HepG2 (cell line): ENCODE measurements at regions of chr9 and their contacts with region 1.

Region 1: DNA sequence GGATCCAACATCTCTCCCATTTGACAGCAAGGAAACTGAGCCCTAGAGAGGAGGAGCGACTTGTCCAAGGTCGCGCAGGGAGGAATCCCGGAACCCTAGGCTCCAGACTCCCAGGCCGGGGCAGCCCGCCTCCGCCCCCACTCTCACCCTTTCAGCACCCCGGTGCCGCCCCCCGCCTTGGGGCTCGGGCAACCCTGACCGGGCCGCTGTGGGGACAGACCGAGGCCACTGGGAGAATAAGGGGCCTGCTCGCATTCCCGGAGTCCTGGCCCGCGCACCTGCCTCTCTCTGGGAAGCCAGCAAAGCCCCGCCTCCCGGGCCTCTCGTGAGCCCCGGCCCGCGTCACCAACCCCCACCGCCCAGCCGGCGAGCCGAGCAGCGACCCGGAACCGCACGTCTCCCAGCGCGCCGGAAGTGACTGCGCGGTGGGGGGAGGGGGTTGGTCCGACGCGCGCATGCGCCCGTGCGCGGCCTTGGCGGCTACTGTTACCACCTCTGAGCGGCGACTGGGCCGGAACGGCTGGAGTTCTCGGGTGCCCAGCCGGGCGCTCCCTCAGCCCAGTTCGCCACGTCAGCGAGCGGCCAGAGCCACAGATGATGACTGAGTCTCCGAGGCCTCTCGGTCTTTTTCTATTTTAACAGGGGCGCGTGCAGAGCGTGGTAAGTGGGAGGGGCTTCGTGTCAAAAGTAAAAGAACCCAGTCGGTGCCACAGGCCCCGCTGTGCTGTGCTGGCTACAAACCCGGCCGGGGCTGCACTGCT is at the start of gene GOLGA1:
- DNase-seq: peak; percentile 89
- ATAC-seq: peak; percentile 91
- H3K4me3 ChIP-seq: peak within 1 kb of the TSS; percentile 94 to 99 (median 94)
- H3K27ac ChIP-seq: peak within 1 kb of the TSS; percentile 100
- H3K4me1 ChIP-seq: peaks cover 23% of the 10 kb centered on the region
- H3K27me3 ChIP-seq: no peaks in the 10 kb centered on the region; a peak in 1 of 5 replicates
- CTCF ChIP-seq: no peak
- EP300 ChIP-seq: peak in 1 of 2 experiments; percentile 53; a peak in 1 of 4 replicates
- POLR2A ChIP-seq: peak; percentile 86 to 94
- RAD21 ChIP-seq: 0 out of 2 replicates have a peak, but pooled peaks have one; percentile 7
- total RNA-seq, gene GOLGA1: 15.9 and 21.5 TPM in 2 replicates

Region 2: DNA sequence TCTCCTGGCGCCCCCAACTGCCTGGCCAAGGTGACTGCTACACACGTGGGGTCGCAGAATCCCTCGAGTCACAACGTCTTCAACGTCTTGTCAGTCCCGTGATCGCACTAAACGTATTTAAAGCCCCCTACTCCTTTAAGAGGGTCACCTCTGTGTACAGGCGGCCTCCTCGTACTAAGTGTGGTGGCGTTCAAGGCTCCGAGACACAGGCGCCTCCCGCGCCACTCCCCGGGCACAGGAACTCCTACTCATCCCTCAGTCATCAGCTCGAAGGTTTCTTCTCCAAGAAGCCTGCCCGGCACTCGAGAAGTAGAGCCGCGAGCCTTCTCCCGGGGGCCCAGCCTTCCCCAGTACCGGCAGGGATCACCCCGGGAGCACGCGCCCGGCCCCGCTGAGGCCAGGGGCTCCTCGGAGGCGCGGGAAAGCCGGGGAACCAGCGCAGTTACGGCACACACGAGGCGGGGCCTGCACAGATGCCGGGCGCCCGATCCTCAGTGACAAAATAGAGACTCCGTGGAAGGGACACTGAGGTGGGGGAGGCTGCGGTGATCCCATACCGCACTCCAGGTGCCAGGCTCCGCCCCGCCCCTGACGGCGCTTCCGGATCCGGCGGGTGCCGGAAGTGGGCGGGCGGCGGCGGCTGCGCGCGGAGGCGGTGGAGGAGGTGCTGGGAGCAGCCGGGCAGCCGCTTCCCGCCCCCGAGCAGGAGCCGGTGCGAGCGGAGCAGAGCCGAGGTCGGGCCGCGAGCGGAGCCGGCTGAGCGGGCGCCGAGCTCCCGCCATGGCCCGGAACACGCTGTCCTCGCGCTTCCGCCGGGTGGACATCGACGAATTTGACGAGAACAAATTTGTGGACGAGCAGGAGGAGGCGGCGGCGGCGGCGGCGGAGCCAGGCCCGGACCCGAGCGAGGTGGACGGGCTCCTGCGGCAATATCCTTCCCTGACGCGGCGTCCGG is 72.1 kb before region 1 on chr9:
- CTCF ChIA-PET with region 1: no interaction called
- POLR2A ChIA-PET with region 1: no interaction called
- in situ Hi-C with region 1: no loop called
- intact Hi-C with region 1: loop called (anchors 2 kb)
- DNase-seq: peak; percentile 71
- ATAC-seq: peak; percentile 91
- H3K4me3 ChIP-seq: peak overlapping the region; percentile 81 to 98 (median 94)
- H3K27ac ChIP-seq: peak overlapping the region; percentile 90
- H3K4me1 ChIP-seq: peaks cover 44% of the 10 kb centered on the region
- H3K27me3 ChIP-seq: no peaks in the 10 kb centered on the region; a peak in 1 of 5 replicates
- CTCF ChIP-seq: peak; percentile 64
- EP300 ChIP-seq: peak in 1 of 2 experiments; percentile 15; a peak in 1 of 4 replicates
- POLR2A ChIP-seq: peak; percentile 70 to 93
- RAD21 ChIP-seq: peak; percentile 32; the same call in 1 of the 2 replicates

Region 3: GRCh38 chr9:125143375-125144090 is 202.7 kb after region 1 on chr9 and contains the start of gene SCAI:
- CTCF ChIA-PET with region 1: no interaction called
- POLR2A ChIA-PET with region 1: interaction called, 3 read pairs
- in situ Hi-C with region 1: no loop called
- intact Hi-C with region 1: loop called (anchors 1 kb)
- DNase-seq: peak; percentile 97
- ATAC-seq: peak; percentile 99
- H3K4me3 ChIP-seq: peak within 1 kb of the TSS; percentile 55 to 82 (median 71)
- H3K27ac ChIP-seq: peak within 1 kb of the TSS; percentile 56
- H3K4me1 ChIP-seq: peaks cover 20% of the 10 kb centered on the region
- H3K27me3 ChIP-seq: no peaks in the 10 kb centered on the region; a peak in 1 of 5 replicates
- CTCF ChIP-seq: peak; percentile 96
- EP300 ChIP-seq: 0 out of 4 replicates have a peak, but pooled peaks of 1 of the 2 experiments have one; percentile 13
- POLR2A ChIP-seq: peak in 1 of 2 experiments; percentile 66; a peak in 1 of 4 replicates
- RAD21 ChIP-seq: peak; percentile 97
- total RNA-seq, gene SCAI: 8.4 and 10.3 TPM in 2 replicates